A673 (cell line): ENCODE measurements at regions of chr9 and their contacts with region 1.

Region 1: GRCh38 chr9:1939926-1940368 is 75.2 kb upstream of the SMARCA2 start:
- DNase-seq: peak; percentile 48
- H3K4me3 ChIP-seq: no peak overlapping the region
- H3K27ac ChIP-seq: no peak overlapping the region
- H3K4me1 ChIP-seq: no peaks in the 10 kb centered on the region
- H3K27me3 ChIP-seq: no peaks in the 10 kb centered on the region
- CTCF ChIP-seq: peak; percentile 90

Region 2: DNA sequence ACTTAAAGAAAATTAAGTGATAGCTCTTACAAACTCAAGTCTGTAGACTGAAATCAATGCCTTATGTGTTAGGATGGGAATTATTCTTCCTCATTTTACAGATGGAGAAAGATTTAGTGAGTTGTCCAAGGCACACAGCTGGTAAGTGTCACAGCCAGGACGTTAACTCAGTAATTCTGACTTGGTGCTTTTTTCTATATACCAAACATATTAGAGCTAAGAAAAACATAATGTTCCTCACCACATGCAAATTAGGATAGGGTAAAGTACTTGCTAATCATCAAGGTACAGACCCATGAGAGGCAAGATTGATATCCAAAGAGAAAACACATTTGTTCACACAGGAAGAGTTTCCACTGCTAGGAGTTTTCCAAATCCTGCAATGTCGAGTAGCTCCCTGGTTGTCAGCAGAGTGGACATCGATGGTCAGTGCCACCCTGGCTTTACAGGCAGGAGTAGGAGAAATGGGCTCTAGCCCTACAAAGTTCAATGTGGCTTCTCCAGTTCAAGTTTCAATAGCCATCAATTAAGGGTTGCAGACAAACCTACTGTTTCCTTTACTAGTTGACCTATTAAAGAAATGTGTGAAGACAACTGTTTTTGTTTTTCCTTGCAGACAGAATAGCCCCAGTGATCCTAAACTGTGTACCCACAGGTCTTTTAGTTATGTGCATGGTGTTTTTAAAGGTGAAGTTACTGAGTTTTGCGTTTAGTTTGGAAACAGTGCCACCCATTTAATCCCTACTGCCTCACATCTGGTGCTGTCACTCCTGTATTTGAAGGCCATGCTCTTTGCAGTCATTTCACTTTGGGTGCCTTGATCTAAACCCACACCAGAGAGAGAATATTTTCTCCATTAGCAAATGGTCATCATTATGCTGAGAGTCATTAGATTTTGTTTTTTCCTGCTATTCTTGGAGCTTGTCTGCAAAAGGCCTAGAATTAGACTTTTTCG is 385.6 kb before region 1 on chr9:
- CTCF ChIA-PET with region 1: no interaction called
- POLR2A ChIA-PET with region 1: no interaction called
- intact Hi-C with region 1: no loop called
- DNase-seq: no peak
- H3K4me3 ChIP-seq: no peak overlapping the region
- H3K27ac ChIP-seq: no peak overlapping the region
- H3K4me1 ChIP-seq: no peaks in the 10 kb centered on the region
- H3K27me3 ChIP-seq: no peaks in the 10 kb centered on the region
- CTCF ChIP-seq: no peak

Region 3: GRCh38 chr9:1709345-1709744 is 230.6 kb before region 1 on chr9:
- CTCF ChIA-PET with region 1: no interaction called
- POLR2A ChIA-PET with region 1: no interaction called
- intact Hi-C with region 1: no loop called
- DNase-seq: peak; percentile 33
- H3K4me3 ChIP-seq: no peak overlapping the region
- H3K27ac ChIP-seq: no peak overlapping the region
- H3K4me1 ChIP-seq: no peaks in the 10 kb centered on the region
- H3K27me3 ChIP-seq: peaks cover 13% of the 10 kb centered on the region
- CTCF ChIP-seq: peak; percentile 61

Region 4: DNA sequence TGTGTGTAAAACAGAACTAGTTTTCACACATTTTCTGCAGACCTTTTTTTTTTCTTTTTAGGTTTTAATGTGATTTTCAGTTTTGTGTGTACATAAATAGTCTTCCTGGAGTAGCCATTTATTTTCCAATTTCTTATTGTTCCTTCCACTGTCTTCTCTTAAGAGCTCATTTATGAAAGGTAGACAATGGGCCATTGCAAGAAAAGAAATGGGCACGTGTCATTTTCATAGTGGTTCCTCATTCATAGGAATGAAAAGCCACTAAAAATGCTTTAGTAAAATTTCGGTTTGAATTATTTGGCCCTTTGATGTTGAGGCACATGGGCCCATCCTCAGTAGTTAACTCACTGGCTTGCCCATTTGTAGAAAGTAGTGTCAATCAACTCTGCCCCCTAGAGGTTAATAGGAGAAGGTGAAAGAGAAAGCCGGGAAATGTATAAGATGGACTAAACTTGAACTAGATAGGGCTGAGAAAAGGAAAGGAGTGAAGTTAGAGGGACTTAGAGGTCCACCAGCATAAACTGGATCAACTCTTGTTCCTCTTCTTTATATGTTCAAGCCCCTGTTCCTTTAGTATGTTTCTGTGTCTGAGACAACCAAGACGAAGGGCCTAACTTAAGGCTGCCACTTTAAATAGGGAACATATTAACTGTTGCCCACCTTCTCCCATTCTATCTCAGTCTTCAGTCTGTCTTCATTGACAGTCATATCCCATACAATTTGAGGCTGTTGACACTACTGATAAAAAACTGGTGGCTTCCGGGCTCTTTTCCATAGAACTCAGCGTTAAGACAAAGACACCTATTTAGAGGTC is 147.8 kb after region 1 on chr9:
- CTCF ChIA-PET with region 1: interaction called, 8 read pairs
- POLR2A ChIA-PET with region 1: no interaction called
- intact Hi-C with region 1: loop called (anchors 5 kb)
- DNase-seq: peak; percentile 75
- H3K4me3 ChIP-seq: no peak overlapping the region
- H3K27ac ChIP-seq: no peak overlapping the region
- H3K4me1 ChIP-seq: peaks cover 8% of the 10 kb centered on the region
- H3K27me3 ChIP-seq: no peaks in the 10 kb centered on the region
- CTCF ChIP-seq: peak; percentile 87

Region 5: GRCh38 chr9:2216591-2216990 is 276.6 kb after region 1 on chr9:
- CTCF ChIA-PET with region 1: interaction called, 10 read pairs
- POLR2A ChIA-PET with region 1: no interaction called
- intact Hi-C with region 1: no loop called
- DNase-seq: no peak
- H3K4me3 ChIP-seq: no peak overlapping the region
- H3K27ac ChIP-seq: no peak overlapping the region
- H3K4me1 ChIP-seq: peaks cover 34% of the 10 kb centered on the region
- H3K27me3 ChIP-seq: no peaks in the 10 kb centered on the region
- CTCF ChIP-seq: no peak